ENCODE measurements at regions of chr16 and their contacts with region 1.

Region 1: GRCh38 chr16:29790183-29790952 is at the start of gene KIF22:
- DNase-seq: peak; percentile 99 to 100 (median 100)
- ATAC-seq: peak; percentile 95
- H3K4me3 ChIP-seq: peak within 1 kb of the TSS; percentile 81 to 94
- H3K4me3 Mint-ChIP-seq: peak within 1 kb of the TSS; percentile 99
- H3K27ac ChIP-seq: peak within 1 kb of the TSS; percentile 78 to 80
- H3K27ac Mint-ChIP-seq: peak within 1 kb of the TSS; percentile 95
- H3K4me1 ChIP-seq: peaks cover 30% of the 10 kb centered on the region
- H3K4me1 Mint-ChIP-seq: peaks cover 41% of the 10 kb centered on the region
- H3K27me3 ChIP-seq: no peaks in the 10 kb centered on the region
- H3K27me3 Mint-ChIP-seq: no peaks in the 10 kb centered on the region
- CTCF ChIP-seq: peak; percentile 67
- total RNA-seq, gene KIF22: 93.5 to 105 TPM

Region 2: DNA sequence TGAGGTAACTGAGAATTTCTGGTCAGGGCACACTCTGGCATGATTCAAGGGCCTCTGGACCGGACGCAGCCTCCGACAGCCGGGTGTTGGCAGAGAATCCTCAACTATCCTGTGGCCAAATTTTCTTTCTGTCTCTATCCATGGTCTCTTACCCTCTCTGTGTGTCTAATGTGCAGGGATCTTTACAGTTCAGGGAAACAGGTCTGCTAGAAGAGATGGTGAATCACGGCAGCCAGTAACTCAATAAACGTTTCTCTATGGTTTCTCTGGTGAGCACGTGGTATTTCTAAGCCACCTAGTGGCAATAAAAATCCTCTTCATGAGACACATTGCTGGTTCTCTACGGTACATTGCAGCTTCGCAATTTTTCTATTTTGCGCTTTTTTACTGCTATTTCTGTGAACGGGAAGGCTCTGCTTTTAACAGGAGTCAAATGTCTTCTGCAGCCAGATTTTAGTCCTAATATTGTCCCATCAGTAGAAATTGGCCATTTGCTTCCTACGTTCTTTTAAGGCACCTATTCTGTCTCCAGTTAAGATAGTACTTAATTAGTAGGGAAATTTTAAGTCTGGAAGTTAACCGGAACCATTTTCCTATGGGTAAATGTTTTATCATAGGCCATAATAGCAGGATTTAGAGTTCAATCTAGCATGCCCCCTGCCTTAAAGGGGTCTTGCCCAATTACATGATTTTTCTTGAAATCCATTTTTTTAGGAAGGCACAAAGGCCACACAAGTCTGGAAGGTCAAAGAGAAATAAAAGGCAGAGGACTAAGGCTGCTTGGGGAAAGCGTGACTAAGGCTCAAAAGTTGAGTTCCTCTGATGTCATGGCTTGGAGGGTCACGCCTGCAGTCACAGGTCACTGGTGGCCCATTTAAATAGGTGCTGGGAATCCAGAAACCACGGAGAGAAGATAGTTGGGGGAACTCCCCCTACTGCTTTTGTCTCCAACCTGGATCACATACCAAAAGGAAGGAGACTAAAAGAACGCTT is 79.8 kb before region 1 on chr16:
- CTCF ChIA-PET with region 1: interaction called, 7 read pairs
- POLR2A ChIA-PET with region 1: interaction called, 5 read pairs
- intact Hi-C with region 1: loop called (anchors 2 kb)
- DNase-seq: peak in 7 of 9 experiments; percentile 22 to 84 (median 47)
- ATAC-seq: peak; percentile 100
- H3K4me3 ChIP-seq: no peak overlapping the region
- H3K4me3 Mint-ChIP-seq: no peak overlapping the region
- H3K27ac ChIP-seq: no peak overlapping the region
- H3K27ac Mint-ChIP-seq: peak overlapping the region; percentile 79
- H3K4me1 ChIP-seq: peaks cover 10% of the 10 kb centered on the region
- H3K4me1 Mint-ChIP-seq: peaks cover 11% of the 10 kb centered on the region
- H3K27me3 ChIP-seq: no peaks in the 10 kb centered on the region
- H3K27me3 Mint-ChIP-seq: no peaks in the 10 kb centered on the region
- CTCF ChIP-seq: peak; percentile 76

Region 3: DNA sequence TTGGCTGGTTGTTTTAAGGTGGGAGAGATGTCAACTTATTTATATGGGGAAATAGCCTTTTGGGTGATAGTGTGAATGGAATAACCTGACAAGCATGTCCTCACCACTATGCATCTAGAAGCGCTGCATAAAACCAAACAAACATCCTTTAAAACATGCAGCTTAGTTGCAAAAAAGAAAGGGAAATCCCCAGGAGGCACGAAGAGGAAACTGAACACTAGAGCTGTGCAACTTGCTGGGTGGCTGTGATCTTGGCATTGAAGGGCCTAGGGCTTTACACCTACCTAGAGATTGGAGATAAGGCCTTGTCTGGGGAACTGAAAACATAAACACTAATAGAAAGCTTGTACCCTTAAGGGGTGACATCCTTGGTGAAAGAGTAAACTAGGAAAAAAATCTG is 51.9 kb before region 1 on chr16:
- CTCF ChIA-PET with region 1: interaction called, 19 read pairs
- POLR2A ChIA-PET with region 1: interaction called, 31 read pairs
- intact Hi-C with region 1: loop called (anchors 1 kb)
- DNase-seq: peak in 8 of 9 experiments; percentile 41 to 92 (median 65)
- ATAC-seq: peak; percentile 92
- H3K4me3 ChIP-seq: peak overlapping the region in 1 of 2 experiments; percentile 21
- H3K4me3 Mint-ChIP-seq: peak overlapping the region; percentile 53
- H3K27ac ChIP-seq: peak overlapping the region; percentile 36 to 67
- H3K27ac Mint-ChIP-seq: peak overlapping the region; percentile 87
- H3K4me1 ChIP-seq: peaks cover 74% of the 10 kb centered on the region
- H3K4me1 Mint-ChIP-seq: peaks cover 77% of the 10 kb centered on the region
- H3K27me3 ChIP-seq: no peaks in the 10 kb centered on the region
- H3K27me3 Mint-ChIP-seq: no peaks in the 10 kb centered on the region
- CTCF ChIP-seq: no peak

Region 4: GRCh38 chr16:29775742-29776408 is 14.5 kb before region 1 on chr16:
- CTCF ChIA-PET with region 1: interaction called, 10 read pairs
- POLR2A ChIA-PET with region 1: interaction called, 5 read pairs
- intact Hi-C with region 1: no loop called
- DNase-seq: no peak
- ATAC-seq: no peak
- H3K4me3 ChIP-seq: no peak overlapping the region
- H3K4me3 Mint-ChIP-seq: no peak overlapping the region
- H3K27ac ChIP-seq: no peak overlapping the region
- H3K27ac Mint-ChIP-seq: no peak overlapping the region
- H3K4me1 ChIP-seq: no peaks in the 10 kb centered on the region
- H3K4me1 Mint-ChIP-seq: peaks cover 3% of the 10 kb centered on the region
- H3K27me3 ChIP-seq: no peaks in the 10 kb centered on the region
- H3K27me3 Mint-ChIP-seq: no peaks in the 10 kb centered on the region
- CTCF ChIP-seq: no peak

Region 5: DNA sequence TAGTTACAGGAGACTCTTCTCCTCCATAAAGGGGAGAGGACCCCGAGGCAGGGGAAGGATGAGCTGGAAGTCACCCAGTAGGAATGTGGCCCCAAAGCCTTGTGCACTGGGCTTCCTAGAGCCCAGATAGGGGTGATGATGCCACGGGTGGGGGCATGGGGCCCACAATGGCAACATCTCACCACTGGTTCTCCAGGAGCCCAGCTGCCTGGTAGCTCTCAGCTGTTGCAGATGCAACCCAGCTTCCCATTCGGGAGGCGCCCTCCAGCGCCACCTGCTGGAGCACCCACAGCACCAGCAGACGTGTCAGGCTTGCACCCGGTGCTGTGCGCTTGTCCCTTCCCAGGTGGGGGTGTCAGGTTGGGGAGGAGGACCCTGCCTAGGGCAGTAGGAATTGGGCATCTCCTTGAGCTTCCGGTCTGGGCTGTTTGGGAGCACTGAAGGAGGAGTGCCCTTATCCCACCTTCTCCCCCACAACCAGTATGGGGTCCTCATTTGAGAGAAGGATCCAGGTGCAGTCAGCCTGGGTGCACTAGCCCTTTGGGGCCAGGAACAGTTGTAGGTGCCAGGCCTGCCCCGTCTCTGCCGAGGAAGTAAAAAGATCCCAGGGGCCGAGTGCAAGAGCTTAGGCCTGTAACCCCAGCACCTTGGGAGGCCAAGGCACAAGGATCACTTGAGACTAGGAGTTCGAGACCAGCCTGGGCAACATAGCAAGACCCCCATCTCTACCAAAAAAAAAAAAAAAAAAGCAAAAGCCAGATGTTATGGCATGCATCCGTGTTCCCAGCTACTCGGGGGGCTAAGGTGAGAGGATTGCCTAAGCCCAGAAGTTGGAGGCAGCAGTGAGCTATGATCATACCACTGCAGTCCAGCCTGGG is 58.3 kb after region 1 on chr16:
- CTCF ChIA-PET with region 1: interaction called, 21 read pairs
- POLR2A ChIA-PET with region 1: interaction called, 5 read pairs
- intact Hi-C with region 1: no loop called
- DNase-seq: peak; percentile 62 to 92 (median 84)
- ATAC-seq: peak; percentile 98
- H3K4me3 ChIP-seq: no peak overlapping the region
- H3K4me3 Mint-ChIP-seq: no peak overlapping the region
- H3K27ac ChIP-seq: no peak overlapping the region
- H3K27ac Mint-ChIP-seq: no peak overlapping the region
- H3K4me1 ChIP-seq: no peaks in the 10 kb centered on the region
- H3K4me1 Mint-ChIP-seq: peaks cover 3% of the 10 kb centered on the region
- H3K27me3 ChIP-seq: no peaks in the 10 kb centered on the region
- H3K27me3 Mint-ChIP-seq: no peaks in the 10 kb centered on the region
- CTCF ChIP-seq: peak; percentile 78